Posterior cingulate gyrus (tissue), 11 donors: ENCODE measurements at regions of chr17 and their contacts with region 1.

Region 1: GRCh38 chr17:29931231-29931932 is 1.4 kb upstream of the SSH2 start:
- DNase-seq: peak; percentile 57 to 96 (median 76)

Region 2: DNA sequence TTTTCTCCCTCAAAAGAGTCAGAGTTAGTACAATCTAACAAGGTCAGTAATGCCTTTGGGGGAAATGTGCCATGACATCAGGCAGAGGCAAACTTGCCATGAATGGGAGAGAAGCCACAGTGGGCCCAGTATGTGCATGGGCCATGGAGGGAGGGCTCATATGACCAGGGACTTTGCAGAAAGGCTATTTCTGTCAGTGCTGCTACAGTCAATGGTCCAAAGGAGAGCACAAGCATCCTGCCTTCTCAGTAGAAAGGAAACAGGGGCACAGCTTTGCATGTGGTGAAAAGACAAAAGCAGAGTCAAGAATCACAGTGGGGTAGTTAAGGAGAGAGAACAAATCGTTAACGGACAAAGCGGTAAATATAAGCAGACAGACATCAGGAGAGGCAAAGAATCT is 297.5 kb before region 1 on chr17:
- intact Hi-C with region 1: loop called (anchors 5 kb)
- DNase-seq: peak in 1 of 10 donors; percentile 14

Region 3: DNA sequence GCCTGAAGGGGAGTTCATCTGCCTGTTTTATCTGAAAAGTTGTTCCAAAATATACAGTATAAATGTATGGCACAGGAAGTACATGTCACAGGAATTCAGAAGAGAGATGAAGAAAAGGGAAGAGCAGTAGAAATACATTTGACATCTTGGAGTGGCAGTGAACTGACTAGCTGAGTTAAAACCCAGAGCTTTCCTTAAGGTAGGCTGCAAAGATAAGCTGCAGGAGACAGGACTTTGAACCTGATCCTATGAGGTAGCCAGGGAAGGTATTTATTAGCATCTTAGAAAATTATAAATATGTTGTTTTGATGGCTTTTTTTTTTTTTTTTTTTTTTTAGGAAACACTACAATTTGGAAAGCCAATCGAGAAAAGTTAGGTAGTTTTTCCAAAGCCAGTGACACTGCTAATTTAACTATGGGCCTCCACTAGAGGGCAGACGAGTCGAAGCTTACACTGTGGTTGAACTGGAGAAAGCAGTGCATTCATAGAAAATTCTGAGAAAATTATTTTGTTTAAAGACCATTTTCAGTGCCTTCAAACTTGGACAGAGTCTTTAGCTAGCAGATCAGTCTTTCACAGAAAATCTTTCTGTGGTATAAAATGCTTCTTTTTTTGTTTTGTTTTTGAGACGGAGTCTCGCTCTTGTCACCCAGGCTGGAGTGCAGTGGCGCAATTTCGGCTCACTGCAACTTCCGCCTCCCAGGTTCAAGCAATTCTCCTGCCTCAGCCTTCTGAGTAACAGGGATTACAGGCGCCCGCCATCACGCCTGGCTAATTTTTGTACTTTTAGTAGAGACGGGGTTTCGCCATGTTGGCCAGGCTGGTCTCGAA is 123.6 kb before region 1 on chr17:
- intact Hi-C with region 1: loop called (anchors 1 kb)
- DNase-seq: peak in 7 of 10 donors; percentile 32 to 91 (median 72)

Region 4: DNA sequence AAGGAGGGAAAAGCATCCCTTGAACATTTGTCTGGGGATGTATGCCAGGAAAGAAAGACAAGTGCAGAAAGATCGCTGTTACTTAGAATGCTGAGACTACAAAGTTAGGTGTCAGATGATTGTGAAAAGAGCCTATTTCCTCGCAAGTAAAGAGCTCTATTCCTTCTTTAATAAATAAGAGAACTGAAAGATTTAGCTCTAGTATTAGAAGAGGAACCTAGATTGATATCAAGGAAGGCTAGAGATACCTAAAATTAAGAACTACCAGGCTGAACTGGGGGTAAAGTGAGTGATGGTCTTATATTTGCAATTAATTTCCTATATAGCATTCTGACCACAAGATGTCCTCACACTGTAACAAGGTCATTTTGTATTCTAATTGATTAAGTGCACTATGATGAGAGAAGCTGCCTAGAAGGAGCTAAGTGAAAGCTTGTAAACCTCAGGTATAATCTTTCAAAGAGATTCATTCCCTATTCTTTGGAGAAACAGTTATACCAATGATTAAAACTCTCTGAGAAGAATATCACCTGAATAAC is 63.7 kb before region 1 on chr17:
- intact Hi-C with region 1: loop called (anchors 2 kb)
- DNase-seq: no peak

Region 5: DNA sequence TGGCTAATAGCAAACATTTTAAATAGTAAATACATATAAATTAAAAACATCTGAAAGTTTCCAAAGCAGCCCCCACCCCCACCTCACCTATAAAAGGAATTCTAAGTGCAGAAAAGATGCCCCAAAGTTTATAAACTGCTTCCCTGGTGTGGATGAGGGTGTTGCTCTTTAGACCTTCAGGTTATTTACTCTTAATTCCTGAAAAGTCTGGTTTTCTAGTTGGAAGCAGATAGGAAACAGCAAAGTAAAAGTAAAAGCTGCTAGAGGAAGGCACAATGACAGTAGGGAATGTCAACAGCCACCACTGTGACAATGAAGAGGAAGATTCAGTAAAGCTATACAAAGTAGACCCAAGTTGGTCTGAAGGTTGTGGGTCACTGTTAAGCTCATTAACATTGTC is 39.2 kb before region 1 on chr17:
- intact Hi-C with region 1: no loop called
- DNase-seq: no peak

Region 6: GRCh38 chr17:30093463-30094147 is 162.2 kb after region 1 on chr17:
- intact Hi-C with region 1: loop called (anchors 5 kb)
- DNase-seq: peak in 4 of 10 donors; percentile 33 to 54 (median 38)